ENCODE measurements at regions of chr12 and their contacts with region 1.

Region 1: GRCh38 chr12:7905071-7905470 is 30.9 kb downstream of the SLC2A3 start:
- DNase-seq: no peak
- ATAC-seq: no peak
- H3K4me3 ChIP-seq: no peak overlapping the region
- H3K27ac ChIP-seq: no peak overlapping the region
- H3K4me1 ChIP-seq: no peaks in the 10 kb centered on the region
- H3K27me3 ChIP-seq: no peaks in the 10 kb centered on the region
- CTCF ChIP-seq: no peak
- EP300 ChIP-seq: no peak
- POLR2A ChIP-seq: no peak
- RAD21 ChIP-seq: no peak

Region 2: GRCh38 chr12:7566971-7567370 is 338.1 kb before region 1 on chr12:
- CTCF ChIA-PET with region 1: no interaction called
- POLR2A ChIA-PET with region 1: no interaction called
- RAD21 ChIA-PET with region 1: no interaction called
- SMC1A ChIA-PET with region 1: no interaction called
- in situ Hi-C with region 1: no loop called
- intact Hi-C with region 1: no loop called
- DNase-seq: no peak
- ATAC-seq: no peak
- H3K4me3 ChIP-seq: no peak overlapping the region
- H3K27ac ChIP-seq: no peak overlapping the region
- H3K4me1 ChIP-seq: no peaks in the 10 kb centered on the region
- H3K27me3 ChIP-seq: no peaks in the 10 kb centered on the region
- CTCF ChIP-seq: no peak
- EP300 ChIP-seq: no peak
- POLR2A ChIP-seq: no peak
- RAD21 ChIP-seq: no peak

Region 3: DNA sequence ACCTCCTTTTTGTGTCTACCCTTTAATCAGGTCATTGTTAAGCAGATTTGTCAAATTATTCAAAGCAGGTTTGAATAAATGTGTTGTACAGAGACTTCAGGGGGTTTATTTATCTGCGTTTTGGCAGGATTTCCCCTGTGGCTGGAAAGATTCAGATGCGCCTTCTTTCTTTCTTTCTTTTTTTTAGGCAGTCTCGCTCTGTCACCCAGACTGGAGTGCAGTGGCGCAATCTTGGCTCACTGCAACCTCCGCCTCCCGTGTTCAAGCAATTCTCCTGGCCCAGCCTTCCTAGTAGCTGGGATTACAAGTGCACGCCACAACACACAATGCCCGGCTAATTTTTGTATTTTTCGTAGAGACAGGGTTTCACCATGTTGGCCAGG is 146.3 kb before region 1 on chr12:
- CTCF ChIA-PET with region 1: no interaction called
- POLR2A ChIA-PET with region 1: no interaction called
- RAD21 ChIA-PET with region 1: no interaction called
- SMC1A ChIA-PET with region 1: no interaction called
- in situ Hi-C with region 1: no loop called
- intact Hi-C with region 1: no loop called
- DNase-seq: no peak
- ATAC-seq: no peak
- H3K4me3 ChIP-seq: no peak overlapping the region
- H3K27ac ChIP-seq: no peak overlapping the region
- H3K4me1 ChIP-seq: peaks cover 2% of the 10 kb centered on the region; the same call in 1 of the 2 replicates
- H3K27me3 ChIP-seq: no peaks in the 10 kb centered on the region
- CTCF ChIP-seq: no peak
- EP300 ChIP-seq: no peak
- POLR2A ChIP-seq: no peak
- RAD21 ChIP-seq: no peak

Region 4: DNA sequence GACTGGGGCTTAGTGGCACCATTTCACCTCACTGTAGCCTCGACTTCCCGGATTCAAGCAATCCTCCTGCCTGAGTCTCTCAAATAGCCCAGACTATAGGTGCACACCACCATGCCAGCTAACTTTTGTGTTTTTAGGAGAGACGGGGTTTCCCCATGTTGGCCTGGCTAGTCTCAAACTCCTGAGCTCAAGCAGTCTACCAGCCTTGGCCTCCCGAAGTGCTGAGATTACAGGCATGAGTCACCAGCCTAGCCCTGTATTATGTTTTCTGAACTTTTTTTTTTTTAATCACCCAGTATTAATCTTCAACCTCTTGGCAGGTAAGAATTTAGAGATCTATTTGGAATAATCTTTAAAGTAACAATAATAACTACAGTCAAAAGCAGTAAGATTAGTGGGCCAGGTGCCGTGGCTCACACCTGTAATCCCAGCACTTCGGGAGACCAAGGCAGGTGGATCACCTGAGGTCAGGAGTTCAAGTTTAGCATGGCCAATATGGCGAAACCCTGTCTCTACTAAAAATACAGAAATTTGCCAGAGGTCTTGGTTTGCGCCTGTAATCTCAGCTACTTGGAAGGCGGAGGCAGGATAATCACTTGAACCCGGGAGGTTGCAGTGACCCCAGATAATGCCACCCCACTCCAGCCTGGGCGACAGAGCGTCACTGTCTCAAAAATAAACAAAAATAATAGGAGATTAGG is 107.2 kb before region 1 on chr12:
- CTCF ChIA-PET with region 1: no interaction called
- POLR2A ChIA-PET with region 1: interaction called, 3 read pairs
- RAD21 ChIA-PET with region 1: interaction called, 3 read pairs
- SMC1A ChIA-PET with region 1: no interaction called
- in situ Hi-C with region 1: no loop called
- intact Hi-C with region 1: loop called (anchors 2 kb)
- DNase-seq: no peak
- ATAC-seq: no peak
- H3K4me3 ChIP-seq: no peak overlapping the region
- H3K27ac ChIP-seq: no peak overlapping the region
- H3K4me1 ChIP-seq: no peaks in the 10 kb centered on the region
- H3K27me3 ChIP-seq: no peaks in the 10 kb centered on the region
- CTCF ChIP-seq: no peak
- EP300 ChIP-seq: no peak
- POLR2A ChIP-seq: no peak
- RAD21 ChIP-seq: no peak